A673 (cell line): ENCODE measurements at regions of chr4 and their contacts with region 1.

Region 1: DNA sequence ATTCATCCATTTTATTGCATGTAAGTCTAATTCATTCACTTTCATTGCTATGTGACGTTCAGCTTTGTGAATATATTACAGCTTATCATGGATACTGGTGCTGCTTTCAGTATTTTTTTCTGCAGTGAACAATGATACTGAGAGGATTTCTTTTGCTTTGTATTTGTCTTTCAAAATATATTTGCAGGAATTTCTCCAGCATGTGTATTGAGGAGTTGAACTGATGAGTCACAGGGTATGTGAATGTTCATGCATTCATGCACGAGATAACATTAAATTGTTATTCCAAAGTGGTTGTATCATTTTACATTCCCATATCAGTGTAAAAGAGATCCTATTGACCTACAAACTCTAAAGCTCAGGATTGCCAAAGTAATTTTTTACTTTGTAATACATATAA is 283.8 kb upstream of the ARSJ start:
- DNase-seq: no peak
- H3K4me3 ChIP-seq: no peak overlapping the region
- H3K27ac ChIP-seq: no peak overlapping the region
- H3K4me1 ChIP-seq: no peaks in the 10 kb centered on the region
- H3K27me3 ChIP-seq: no peaks in the 10 kb centered on the region
- CTCF ChIP-seq: no peak

Region 2: DNA sequence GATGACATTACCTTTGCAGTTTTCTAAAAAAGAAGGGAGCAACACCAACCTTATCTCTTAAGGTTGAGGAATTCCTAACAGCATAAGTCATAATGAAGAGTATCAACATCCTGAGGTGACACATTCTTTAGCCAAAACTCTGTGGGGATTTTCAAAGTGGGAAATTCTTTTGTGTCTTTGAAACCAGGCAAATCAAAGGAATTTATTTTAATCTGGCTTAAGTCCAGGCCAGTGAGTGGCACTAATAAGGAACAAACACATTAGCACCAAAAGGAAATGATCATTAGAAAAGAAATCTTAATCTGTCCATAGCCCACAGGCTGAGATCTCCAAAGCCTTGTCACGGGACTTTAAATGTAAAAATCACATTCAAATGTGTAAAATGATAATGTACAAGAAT is 1516.2 kb before region 1 on chr4:
- CTCF ChIA-PET with region 1: no interaction called
- POLR2A ChIA-PET with region 1: no interaction called
- intact Hi-C with region 1: no loop called
- DNase-seq: peak; percentile 75
- H3K4me3 ChIP-seq: no peak overlapping the region
- H3K27ac ChIP-seq: no peak overlapping the region
- H3K4me1 ChIP-seq: peaks cover 18% of the 10 kb centered on the region
- H3K27me3 ChIP-seq: no peaks in the 10 kb centered on the region
- CTCF ChIP-seq: no peak

Region 3: DNA sequence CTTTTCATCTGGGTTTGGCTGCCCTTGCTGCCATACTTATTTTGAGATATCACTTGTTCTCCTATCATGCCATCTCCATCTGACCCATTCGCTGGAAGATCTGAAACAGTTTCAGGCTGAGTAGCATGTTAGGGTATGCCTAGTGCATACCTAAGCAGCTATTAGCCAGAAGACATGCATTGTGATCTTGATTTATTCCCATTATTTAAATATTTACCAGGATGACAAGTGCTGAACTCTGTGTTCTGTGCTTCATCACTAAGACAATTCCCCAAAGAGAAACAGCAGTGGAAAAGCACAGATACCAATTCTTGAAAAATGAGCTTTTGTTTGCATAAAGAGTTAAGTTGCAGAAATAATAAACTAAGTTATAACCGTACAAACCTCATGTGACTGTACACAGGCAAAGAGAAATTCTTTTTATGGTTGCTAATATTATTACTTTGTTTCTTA is 12.8 kb before region 1 on chr4:
- CTCF ChIA-PET with region 1: no interaction called
- POLR2A ChIA-PET with region 1: no interaction called
- intact Hi-C with region 1: loop called (anchors 1 kb)
- DNase-seq: no peak
- H3K4me3 ChIP-seq: no peak overlapping the region
- H3K27ac ChIP-seq: no peak overlapping the region
- H3K4me1 ChIP-seq: no peaks in the 10 kb centered on the region
- H3K27me3 ChIP-seq: no peaks in the 10 kb centered on the region
- CTCF ChIP-seq: no peak